B cell (primary cell): ENCODE measurements at regions of chr17 and their contacts with region 1.

Region 1: DNA sequence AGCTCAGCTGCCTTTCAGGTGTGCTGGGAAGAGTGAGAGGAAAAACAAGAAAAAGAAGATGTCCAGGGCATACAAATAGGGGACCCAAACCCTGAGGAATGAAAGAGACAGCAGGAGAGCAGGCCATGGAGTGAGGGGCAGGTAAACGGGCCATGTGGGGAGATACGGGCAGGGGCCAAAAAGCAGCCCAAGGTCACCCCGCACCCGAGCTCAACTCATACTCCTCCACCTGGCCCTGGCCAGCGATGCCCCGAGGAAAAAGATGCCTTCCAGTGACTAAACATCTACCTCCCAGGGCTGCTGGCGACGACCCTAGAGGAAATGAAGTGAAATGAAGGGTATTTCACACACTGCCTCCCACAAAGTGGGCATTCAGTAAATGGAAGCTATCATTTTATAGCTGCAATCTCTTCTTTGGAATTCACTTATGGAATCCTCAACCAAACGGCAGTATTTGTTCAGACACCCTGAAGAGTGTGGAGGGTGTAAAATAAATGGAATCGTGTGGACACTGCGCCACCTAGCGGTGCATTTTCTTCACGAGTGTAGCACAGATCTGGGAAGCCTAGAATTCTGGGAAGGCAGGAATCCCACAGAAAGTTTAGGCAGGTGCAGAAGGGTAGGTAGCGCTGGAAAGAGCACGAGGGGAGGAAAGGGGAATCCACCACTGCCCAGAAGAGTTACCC is 14.9 kb downstream of the ELAC2 start:
- DNase-seq: peak; percentile 63
- ATAC-seq: peak; percentile 66
- H3K4me3 ChIP-seq: no peak overlapping the region
- H3K4me3 Mint-ChIP-seq: no peak overlapping the region
- H3K27ac ChIP-seq: no peak overlapping the region
- H3K27ac Mint-ChIP-seq: no peak overlapping the region
- H3K4me1 ChIP-seq: no peaks in the 10 kb centered on the region
- H3K4me1 Mint-ChIP-seq: no peaks in the 10 kb centered on the region
- H3K27me3 ChIP-seq: no peaks in the 10 kb centered on the region
- H3K27me3 Mint-ChIP-seq: no peaks in the 10 kb centered on the region
- CTCF ChIP-seq: peak; percentile 93

Region 2: GRCh38 chr17:12180644-12181261 is 822.2 kb before region 1 on chr17:
- CTCF ChIA-PET with region 1: interaction called, 5 read pairs
- POLR2A ChIA-PET with region 1: no interaction called
- intact Hi-C with region 1: loop called (anchors 2 kb)
- DNase-seq: peak; percentile 17
- ATAC-seq: peak; percentile 24
- H3K4me3 ChIP-seq: no peak overlapping the region
- H3K4me3 Mint-ChIP-seq: no peak overlapping the region
- H3K27ac ChIP-seq: no peak overlapping the region
- H3K27ac Mint-ChIP-seq: no peak overlapping the region
- H3K4me1 ChIP-seq: no peaks in the 10 kb centered on the region
- H3K4me1 Mint-ChIP-seq: no peaks in the 10 kb centered on the region
- H3K27me3 ChIP-seq: no peaks in the 10 kb centered on the region
- H3K27me3 Mint-ChIP-seq: no peaks in the 10 kb centered on the region
- CTCF ChIP-seq: peak; percentile 78

Region 3: GRCh38 chr17:12545877-12546513 is 456.9 kb before region 1 on chr17:
- CTCF ChIA-PET with region 1: interaction called, 19 read pairs
- POLR2A ChIA-PET with region 1: no interaction called
- intact Hi-C with region 1: no loop called
- DNase-seq: peak; percentile 35
- ATAC-seq: peak; percentile 43
- H3K4me3 ChIP-seq: no peak overlapping the region
- H3K4me3 Mint-ChIP-seq: no peak overlapping the region
- H3K27ac ChIP-seq: no peak overlapping the region
- H3K27ac Mint-ChIP-seq: no peak overlapping the region
- H3K4me1 ChIP-seq: no peaks in the 10 kb centered on the region
- H3K4me1 Mint-ChIP-seq: no peaks in the 10 kb centered on the region
- H3K27me3 ChIP-seq: no peaks in the 10 kb centered on the region
- H3K27me3 Mint-ChIP-seq: peaks cover 5% of the 10 kb centered on the region
- CTCF ChIP-seq: peak; percentile 75

Region 4: DNA sequence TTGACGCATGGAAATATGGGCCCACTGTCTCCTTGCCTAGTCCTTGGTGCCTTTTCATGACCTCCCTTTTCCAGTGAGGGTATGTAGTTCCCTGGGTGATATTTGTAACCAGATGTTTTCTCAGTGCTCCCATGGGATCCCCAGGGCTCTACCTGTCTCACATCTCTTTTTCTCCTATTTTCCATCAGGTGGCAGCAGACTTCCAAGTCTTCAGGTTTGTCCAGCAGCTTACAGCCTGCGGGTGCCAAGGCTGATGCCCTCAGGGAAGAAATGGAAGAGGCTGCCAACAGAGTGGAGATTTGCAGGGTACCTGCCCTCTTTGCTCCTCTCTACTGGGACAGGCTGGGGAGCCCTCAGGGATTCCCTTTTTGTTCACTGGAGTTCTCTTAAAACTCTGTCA is 74.2 kb before region 1 on chr17:
- CTCF ChIA-PET with region 1: interaction called, 37 read pairs
- POLR2A ChIA-PET with region 1: no interaction called
- intact Hi-C with region 1: loop called (anchors 1 kb)
- DNase-seq: no peak
- ATAC-seq: no peak
- H3K4me3 ChIP-seq: no peak overlapping the region
- H3K4me3 Mint-ChIP-seq: no peak overlapping the region
- H3K27ac ChIP-seq: no peak overlapping the region
- H3K27ac Mint-ChIP-seq: no peak overlapping the region
- H3K4me1 ChIP-seq: no peaks in the 10 kb centered on the region
- H3K4me1 Mint-ChIP-seq: no peaks in the 10 kb centered on the region
- H3K27me3 ChIP-seq: no peaks in the 10 kb centered on the region
- H3K27me3 Mint-ChIP-seq: no peaks in the 10 kb centered on the region
- CTCF ChIP-seq: no peak

Region 5: DNA sequence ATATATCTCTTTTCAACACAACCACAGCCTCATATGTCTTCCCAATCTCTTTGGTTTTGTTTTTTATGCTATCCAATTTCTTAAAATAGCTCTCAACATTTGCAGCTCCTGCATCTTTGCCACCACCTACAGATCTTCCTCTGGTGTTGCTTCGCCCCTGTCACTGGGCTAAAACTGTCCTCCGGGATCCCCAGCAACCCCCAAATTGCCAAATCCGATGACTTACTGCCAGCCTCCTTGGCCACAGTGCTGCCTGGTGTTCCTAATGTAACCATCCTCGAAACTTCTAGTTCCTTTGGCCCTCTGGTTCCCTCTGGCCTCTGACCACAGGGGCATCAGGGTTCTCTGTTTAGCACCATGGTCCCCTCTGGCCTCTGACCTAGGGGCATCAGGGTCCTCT is 55.9 kb before region 1 on chr17:
- CTCF ChIA-PET with region 1: no interaction called
- POLR2A ChIA-PET with region 1: no interaction called
- intact Hi-C with region 1: no loop called
- DNase-seq: no peak
- ATAC-seq: no peak
- H3K4me3 ChIP-seq: no peak overlapping the region
- H3K4me3 Mint-ChIP-seq: no peak overlapping the region
- H3K27ac ChIP-seq: no peak overlapping the region
- H3K27ac Mint-ChIP-seq: no peak overlapping the region
- H3K4me1 ChIP-seq: no peaks in the 10 kb centered on the region
- H3K4me1 Mint-ChIP-seq: no peaks in the 10 kb centered on the region
- H3K27me3 ChIP-seq: no peaks in the 10 kb centered on the region
- H3K27me3 Mint-ChIP-seq: no peaks in the 10 kb centered on the region
- CTCF ChIP-seq: no peak

Region 6: GRCh38 chr17:13031718-13032350 is 28.9 kb after region 1 on chr17:
- CTCF ChIA-PET with region 1: interaction called, 32 read pairs
- POLR2A ChIA-PET with region 1: no interaction called
- intact Hi-C with region 1: no loop called
- DNase-seq: peak; percentile 68
- ATAC-seq: peak; percentile 73
- H3K4me3 ChIP-seq: peak overlapping the region in 2 of 5 experiments; percentile 27 to 36
- H3K4me3 Mint-ChIP-seq: peak overlapping the region; percentile 66
- H3K27ac ChIP-seq: no peak overlapping the region
- H3K27ac Mint-ChIP-seq: no peak overlapping the region
- H3K4me1 ChIP-seq: peaks cover 0 to 5% of the 10 kb centered on the region in 2 donors
- H3K4me1 Mint-ChIP-seq: peaks cover 6% of the 10 kb centered on the region
- H3K27me3 ChIP-seq: peaks cover 0 to 3% (median 0%) of the 10 kb centered on the region in 4 experiments
- H3K27me3 Mint-ChIP-seq: peaks cover 19% of the 10 kb centered on the region
- CTCF ChIP-seq: peak; percentile 86